ENCODE measurements at regions of chr1 and their contacts with region 1.

Region 1: DNA sequence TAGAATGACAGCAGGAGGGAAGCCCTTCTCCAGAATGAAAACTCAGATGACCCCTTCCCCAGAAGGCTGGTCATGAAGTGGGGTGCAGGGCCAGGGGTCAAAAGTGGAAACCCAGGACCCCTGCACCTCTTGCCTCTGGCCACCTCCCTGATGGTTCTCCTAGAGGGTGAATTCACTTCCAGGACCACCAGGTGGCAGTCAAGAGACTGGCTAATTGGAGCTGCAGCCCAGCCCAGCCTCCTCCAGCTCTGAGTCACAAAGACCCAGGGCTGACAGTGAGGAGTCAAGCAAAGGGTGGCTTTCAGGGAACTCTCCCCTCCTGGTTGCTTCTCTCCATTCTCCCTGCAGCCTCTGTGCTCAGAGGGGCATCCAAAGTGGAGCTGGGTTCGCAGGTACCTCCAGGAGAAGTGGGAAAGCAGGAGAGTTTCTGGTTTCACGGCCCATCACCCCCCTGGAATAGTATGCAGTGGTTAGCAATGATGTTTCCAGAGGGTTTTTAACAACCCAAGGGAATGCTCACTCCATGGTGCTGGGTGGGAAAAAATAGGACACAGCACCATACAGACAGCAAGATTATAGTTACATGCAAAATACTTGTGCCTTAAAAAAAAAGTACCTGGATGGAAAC is 6.1 kb upstream of the EPHB2 start:
- DNase-seq: peak; percentile 47 to 75 (median 69)
- ATAC-seq: peak; percentile 78
- H3K4me3 ChIP-seq: no peak overlapping the region
- H3K4me3 Mint-ChIP-seq: no peak overlapping the region
- H3K27ac ChIP-seq: no peak overlapping the region
- H3K27ac Mint-ChIP-seq: no peak overlapping the region
- H3K4me1 ChIP-seq: no peaks in the 10 kb centered on the region
- H3K4me1 Mint-ChIP-seq: no peaks in the 10 kb centered on the region
- H3K27me3 ChIP-seq: peaks cover 2 to 3% of the 10 kb centered on the region in 2 experiments
- H3K27me3 Mint-ChIP-seq: peaks cover 34% of the 10 kb centered on the region
- CTCF ChIP-seq: peak; percentile 72

Region 2: GRCh38 chr1:22728751-22729399 is 24.3 kb after region 1 on chr1:
- CTCF ChIA-PET with region 1: interaction called, 10 read pairs
- POLR2A ChIA-PET with region 1: no interaction called
- intact Hi-C with region 1: no loop called
- DNase-seq: no peak
- ATAC-seq: no peak
- H3K4me3 ChIP-seq: no peak overlapping the region
- H3K4me3 Mint-ChIP-seq: no peak overlapping the region
- H3K27ac ChIP-seq: no peak overlapping the region
- H3K27ac Mint-ChIP-seq: no peak overlapping the region
- H3K4me1 ChIP-seq: no peaks in the 10 kb centered on the region
- H3K4me1 Mint-ChIP-seq: no peaks in the 10 kb centered on the region
- H3K27me3 ChIP-seq: no peaks in the 10 kb centered on the region
- H3K27me3 Mint-ChIP-seq: peaks cover 12% of the 10 kb centered on the region
- CTCF ChIP-seq: no peak

Region 3: GRCh38 chr1:22831729-22832413 is 127.3 kb after region 1 on chr1:
- CTCF ChIA-PET with region 1: no interaction called
- POLR2A ChIA-PET with region 1: no interaction called
- intact Hi-C with region 1: no loop called
- DNase-seq: peak in 1 of 9 experiments; percentile 8
- ATAC-seq: no peak
- H3K4me3 ChIP-seq: no peak overlapping the region
- H3K4me3 Mint-ChIP-seq: no peak overlapping the region
- H3K27ac ChIP-seq: no peak overlapping the region
- H3K27ac Mint-ChIP-seq: no peak overlapping the region
- H3K4me1 ChIP-seq: no peaks in the 10 kb centered on the region
- H3K4me1 Mint-ChIP-seq: no peaks in the 10 kb centered on the region
- H3K27me3 ChIP-seq: no peaks in the 10 kb centered on the region
- H3K27me3 Mint-ChIP-seq: peaks cover 2% of the 10 kb centered on the region
- CTCF ChIP-seq: no peak

Region 4: GRCh38 chr1:22889213-22889827 is 184.8 kb after region 1 on chr1:
- CTCF ChIA-PET with region 1: no interaction called
- POLR2A ChIA-PET with region 1: no interaction called
- intact Hi-C with region 1: loop called in 1 of 2 experiments (anchors 2 kb)
- DNase-seq: peak in 2 of 9 experiments; percentile 23 to 36
- ATAC-seq: no peak
- H3K4me3 ChIP-seq: no peak overlapping the region
- H3K4me3 Mint-ChIP-seq: no peak overlapping the region
- H3K27ac ChIP-seq: no peak overlapping the region
- H3K27ac Mint-ChIP-seq: no peak overlapping the region
- H3K4me1 ChIP-seq: peaks cover 5% of the 10 kb centered on the region
- H3K4me1 Mint-ChIP-seq: peaks cover 10% of the 10 kb centered on the region
- H3K27me3 ChIP-seq: no peaks in the 10 kb centered on the region
- H3K27me3 Mint-ChIP-seq: no peaks in the 10 kb centered on the region
- CTCF ChIP-seq: no peak

Region 5: DNA sequence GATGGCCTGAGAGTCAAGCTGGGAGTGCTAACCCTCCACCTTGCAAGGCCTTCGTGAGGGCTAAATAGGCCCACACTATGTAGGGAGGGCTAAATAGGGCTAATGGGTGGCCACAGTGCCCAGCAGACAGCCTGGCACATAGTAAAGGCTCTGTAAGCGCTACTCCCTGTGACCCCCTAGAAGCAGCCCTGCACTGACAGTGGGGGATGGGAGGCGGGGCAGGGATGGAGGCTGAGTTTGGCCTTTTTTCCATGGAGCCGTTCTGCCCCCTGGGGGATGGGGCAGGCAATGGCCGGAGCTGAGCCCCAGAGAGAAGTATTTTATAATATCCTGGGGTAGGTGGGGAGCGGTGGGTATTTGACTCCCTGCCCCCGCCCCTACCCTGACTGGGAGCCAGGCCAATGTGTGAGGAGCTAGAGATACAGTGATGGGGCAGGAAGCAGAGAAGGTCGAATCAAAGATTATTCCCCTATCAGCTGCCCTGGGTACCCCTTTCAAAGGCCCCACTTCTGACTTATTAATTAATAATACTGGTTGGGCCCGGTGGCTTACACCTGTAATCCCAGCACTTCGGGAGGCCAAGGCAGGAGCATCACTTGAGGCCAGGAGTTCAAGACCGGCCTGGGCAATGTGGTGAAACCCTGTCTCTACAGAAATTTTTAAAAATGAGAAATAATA is 225.8 kb after region 1 on chr1:
- CTCF ChIA-PET with region 1: interaction called, 4 read pairs
- POLR2A ChIA-PET with region 1: no interaction called
- intact Hi-C with region 1: loop called in 1 of 2 experiments (anchors 10 kb)
- DNase-seq: peak in 3 of 9 experiments; percentile 7 to 33 (median 21)
- ATAC-seq: no peak
- H3K4me3 ChIP-seq: no peak overlapping the region
- H3K4me3 Mint-ChIP-seq: no peak overlapping the region
- H3K27ac ChIP-seq: no peak overlapping the region
- H3K27ac Mint-ChIP-seq: no peak overlapping the region
- H3K4me1 ChIP-seq: no peaks in the 10 kb centered on the region
- H3K4me1 Mint-ChIP-seq: no peaks in the 10 kb centered on the region
- H3K27me3 ChIP-seq: no peaks in the 10 kb centered on the region
- H3K27me3 Mint-ChIP-seq: peaks cover 22% of the 10 kb centered on the region
- CTCF ChIP-seq: no peak

Region 6: GRCh38 chr1:22963044-22963677 is 258.6 kb after region 1 on chr1:
- CTCF ChIA-PET with region 1: interaction called, 11 read pairs
- POLR2A ChIA-PET with region 1: no interaction called
- intact Hi-C with region 1: loop called in 1 of 2 experiments (anchors 1 kb)
- DNase-seq: no peak
- ATAC-seq: no peak
- H3K4me3 ChIP-seq: no peak overlapping the region
- H3K4me3 Mint-ChIP-seq: no peak overlapping the region
- H3K27ac ChIP-seq: no peak overlapping the region
- H3K27ac Mint-ChIP-seq: no peak overlapping the region
- H3K4me1 ChIP-seq: no peaks in the 10 kb centered on the region
- H3K4me1 Mint-ChIP-seq: no peaks in the 10 kb centered on the region
- H3K27me3 ChIP-seq: no peaks in the 10 kb centered on the region
- H3K27me3 Mint-ChIP-seq: peaks cover 12% of the 10 kb centered on the region
- CTCF ChIP-seq: no peak

Region 7: DNA sequence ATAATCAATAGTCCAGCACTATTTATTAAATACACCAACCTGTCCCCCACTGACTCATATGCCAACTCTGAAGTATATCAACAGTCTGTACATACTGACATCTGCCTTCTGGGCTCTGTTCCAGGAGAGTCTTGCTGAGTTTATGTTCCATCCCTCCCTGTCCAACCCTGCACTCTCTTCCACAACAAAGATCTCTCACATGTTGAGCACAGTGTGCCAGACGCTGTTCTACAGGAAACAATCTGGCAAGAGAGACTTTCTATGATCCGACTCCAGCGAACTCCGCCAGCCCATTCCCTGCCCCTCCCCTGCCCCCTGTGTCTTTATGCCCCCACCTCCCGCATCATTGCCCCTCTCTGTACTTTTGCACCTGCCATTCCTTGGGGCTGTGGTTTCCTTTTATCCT is 264.8 kb after region 1 on chr1:
- CTCF ChIA-PET with region 1: interaction called, 11 read pairs
- POLR2A ChIA-PET with region 1: no interaction called
- intact Hi-C with region 1: loop called in 1 of 2 experiments (anchors 1 kb)
- DNase-seq: no peak
- ATAC-seq: no peak
- H3K4me3 ChIP-seq: no peak overlapping the region
- H3K4me3 Mint-ChIP-seq: no peak overlapping the region
- H3K27ac ChIP-seq: no peak overlapping the region
- H3K27ac Mint-ChIP-seq: no peak overlapping the region
- H3K4me1 ChIP-seq: no peaks in the 10 kb centered on the region
- H3K4me1 Mint-ChIP-seq: no peaks in the 10 kb centered on the region
- H3K27me3 ChIP-seq: no peaks in the 10 kb centered on the region
- H3K27me3 Mint-ChIP-seq: peaks cover 45% of the 10 kb centered on the region
- CTCF ChIP-seq: no peak

Measured in CD8-positive, alpha-beta T cell (primary cell).